Heart left ventricle (tissue), 16 donors: ENCODE measurements at regions of chr14 and their contacts with region 1.

Region 1: DNA sequence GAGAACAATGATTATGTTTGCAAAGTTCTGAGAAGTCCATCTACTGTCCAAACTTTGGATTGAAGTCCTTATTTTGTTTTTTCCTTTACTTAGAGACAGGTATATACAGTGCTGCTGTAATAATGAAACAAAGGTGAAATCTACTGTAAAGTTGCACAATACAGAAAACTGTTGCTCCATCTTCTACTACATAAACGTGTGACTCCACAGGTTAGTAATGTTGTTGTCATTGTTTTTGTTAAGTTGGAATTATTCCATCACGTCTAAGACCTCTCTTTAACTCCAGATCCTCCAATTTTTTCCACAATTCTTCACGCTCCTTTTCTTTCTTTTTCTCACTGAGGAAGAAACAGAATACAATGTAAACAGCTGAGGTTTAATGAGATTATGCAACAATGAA is 57.0 kb upstream of the GPHB5 start:
- DNase-seq: no peak
- ATAC-seq: no peak
- H3K4me3 ChIP-seq: no peak overlapping the region
- H3K27ac ChIP-seq: no peak overlapping the region
- H3K4me1 ChIP-seq: no peaks in the 10 kb centered on the region
- H3K27me3 ChIP-seq: no peaks in the 10 kb centered on the region
- CTCF ChIP-seq: no peak
- POLR2A ChIP-seq: no peak

Region 2: DNA sequence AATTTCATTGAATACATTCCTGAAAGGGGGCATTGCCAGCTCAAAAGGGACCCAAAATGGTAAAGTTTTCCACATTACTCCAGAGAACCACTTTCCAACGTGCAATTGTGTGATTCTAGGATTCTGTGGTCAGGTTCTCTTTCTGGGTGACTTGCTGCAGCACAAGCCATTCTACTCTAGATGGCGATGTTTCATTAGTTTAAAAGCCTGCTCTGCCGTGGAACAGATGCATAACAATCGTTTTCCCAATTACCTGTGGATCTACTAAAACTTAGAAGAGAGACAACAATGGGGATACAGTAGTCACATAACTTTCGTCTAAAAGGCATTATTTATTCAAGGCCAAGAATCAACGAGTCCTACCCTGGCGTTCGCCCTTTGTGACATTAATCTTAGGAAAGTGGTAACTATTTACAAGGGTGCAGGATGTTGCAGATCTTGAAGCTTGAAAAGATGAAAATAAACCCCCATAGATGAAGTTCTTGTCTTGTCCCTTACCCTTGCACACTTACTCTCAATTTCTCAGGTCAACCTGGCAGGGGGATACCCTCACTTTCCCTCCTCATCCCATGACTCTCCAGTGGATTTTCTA is 1212.7 kb before region 1 on chr14:
- intact Hi-C with region 1: loop called in 1 of 10 experiments (anchors 5 kb)
- DNase-seq: no peak
- ATAC-seq: peak in 2 of 4 donors; percentile 47 to 57
- H3K4me3 ChIP-seq: no peak overlapping the region
- H3K27ac ChIP-seq: no peak overlapping the region
- H3K4me1 ChIP-seq: no peaks in the 10 kb centered on the region
- H3K27me3 ChIP-seq: peaks cover 0 to 33% (median 0%) of the 10 kb centered on the region in 9 donors
- CTCF ChIP-seq: peak; percentile 44 to 76 (median 62)
- POLR2A ChIP-seq: no peak

Region 3: GRCh38 chr14:63174760-63175211 is 201.0 kb before region 1 on chr14:
- intact Hi-C with region 1: loop called in 4 of 10 experiments (anchors 5 to 10 kb)
- DNase-seq: peak in 2 of 5 donors; percentile 24 to 40
- ATAC-seq: peak in 3 of 4 donors; percentile 53 to 77 (median 69)
- H3K4me3 ChIP-seq: no peak overlapping the region
- H3K27ac ChIP-seq: peak overlapping the region in 1 of 12 donors; percentile 18
- H3K4me1 ChIP-seq: peaks cover 0 to 21% (median 5%) of the 10 kb centered on the region in 12 donors
- H3K27me3 ChIP-seq: no peaks in the 10 kb centered on the region
- CTCF ChIP-seq: peak; percentile 44 to 86 (median 70)
- POLR2A ChIP-seq: no peak